ENCODE measurements at regions of chr9 and their contacts with region 1.

Region 1: DNA sequence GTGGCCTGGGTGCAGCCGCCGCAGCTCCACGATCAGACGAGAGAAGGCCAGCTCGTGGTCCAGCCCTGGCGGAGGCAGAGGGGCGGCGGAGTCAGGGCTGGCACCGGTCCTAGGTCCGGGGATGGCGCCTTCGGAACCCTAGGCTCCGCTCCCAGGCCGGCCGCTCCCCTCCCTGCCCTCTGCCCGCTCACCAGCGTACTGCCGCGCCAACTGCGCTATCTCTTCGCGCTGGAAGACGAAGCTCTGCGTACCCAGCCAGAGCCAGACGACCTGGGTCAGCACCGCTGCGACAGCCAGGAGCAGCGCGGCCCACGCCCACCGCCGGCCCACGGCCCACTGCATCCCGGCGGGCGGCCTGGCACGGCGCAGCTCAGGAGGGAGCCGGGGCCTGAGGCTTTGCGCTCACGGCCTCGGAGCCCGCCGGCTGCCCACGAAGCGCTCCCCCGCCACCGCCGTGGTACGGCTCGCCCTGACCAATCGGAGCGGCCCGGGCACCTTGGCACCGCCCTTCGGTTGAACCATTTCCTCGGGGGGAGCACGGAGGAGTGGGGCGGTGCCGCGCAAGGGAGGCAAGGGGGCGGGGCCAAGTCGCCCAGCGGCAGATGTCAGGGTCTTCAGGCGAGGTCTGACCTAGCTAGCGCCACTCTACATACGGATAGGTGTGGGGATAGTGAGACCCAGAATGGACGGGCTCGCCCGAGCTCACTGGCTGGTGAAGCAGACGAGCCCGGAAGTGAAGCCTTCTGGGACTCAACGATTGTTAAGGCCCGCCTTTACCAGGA is at the start of gene SIGMAR1:
- DNase-seq: peak; percentile 95
- H3K4me3 Mint-ChIP-seq: peak within 1 kb of the TSS; percentile 88
- H3K27ac Mint-ChIP-seq: peak within 1 kb of the TSS; percentile 89
- H3K4me1 Mint-ChIP-seq: peaks cover 42% of the 10 kb centered on the region
- H3K27me3 Mint-ChIP-seq: no peaks in the 10 kb centered on the region

Region 2: GRCh38 chr9:34603610-34604231 is 33.8 kb before region 1 on chr9:
- CTCF ChIA-PET with region 1: interaction called, 33 read pairs
- DNase-seq: peak; percentile 88
- H3K4me3 Mint-ChIP-seq: no peak overlapping the region
- H3K27ac Mint-ChIP-seq: no peak overlapping the region
- H3K4me1 Mint-ChIP-seq: no peaks in the 10 kb centered on the region
- H3K27me3 Mint-ChIP-seq: peaks cover 39% of the 10 kb centered on the region

Region 3: DNA sequence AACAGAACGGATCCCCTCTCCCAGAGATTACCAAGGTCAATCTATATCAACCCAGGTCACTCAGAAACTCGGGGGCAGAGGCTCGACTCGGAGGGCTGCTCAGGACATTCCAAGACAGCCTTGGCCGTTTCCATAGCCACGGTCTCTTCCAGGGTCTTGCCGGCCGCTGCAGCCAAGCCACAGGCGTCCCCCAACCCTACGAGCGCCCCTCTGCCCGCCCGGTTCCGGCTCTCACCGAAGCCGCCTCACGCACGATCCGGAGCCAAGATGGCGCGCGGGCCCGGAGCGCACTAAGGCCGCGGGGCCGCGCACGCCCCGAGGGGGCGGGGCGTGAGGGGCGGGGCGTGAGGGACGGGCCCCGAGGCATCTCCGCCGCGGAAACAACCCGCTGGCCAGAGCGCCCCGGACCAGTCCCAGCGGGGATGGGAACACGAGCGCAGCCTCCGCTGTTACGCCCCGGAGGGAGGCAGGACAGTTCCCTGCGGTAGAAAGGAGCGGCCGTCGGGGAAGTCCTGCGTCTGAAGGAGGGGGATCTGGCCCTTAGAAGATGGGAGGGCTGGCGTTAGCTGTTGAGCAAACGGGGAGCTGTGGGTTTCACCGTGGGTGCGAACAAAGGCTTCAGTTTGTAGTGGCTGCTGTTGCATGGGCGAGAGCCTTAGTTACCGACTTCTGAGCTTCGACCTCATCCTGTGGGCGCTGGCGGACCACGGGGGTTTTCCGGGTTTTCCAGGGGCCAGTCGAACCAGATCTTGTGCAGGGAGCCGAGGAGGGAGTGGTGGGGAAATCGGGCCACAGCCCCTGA is 25.5 kb before region 1 on chr9 and contains the start of gene RPP25L:
- CTCF ChIA-PET with region 1: interaction called, 130 read pairs
- DNase-seq: peak; percentile 88
- H3K4me3 Mint-ChIP-seq: peak within 1 kb of the TSS; percentile 91
- H3K27ac Mint-ChIP-seq: peak within 1 kb of the TSS; percentile 89
- H3K4me1 Mint-ChIP-seq: peaks cover 26% of the 10 kb centered on the region
- H3K27me3 Mint-ChIP-seq: no peaks in the 10 kb centered on the region

Region 4: GRCh38 chr9:34620061-34620994 is 17.2 kb before region 1 on chr9 and contains the start of gene DCTN3:
- CTCF ChIA-PET with region 1: interaction called, 130 read pairs
- DNase-seq: peak; percentile 97
- H3K4me3 Mint-ChIP-seq: peak within 1 kb of the TSS; percentile 85
- H3K27ac Mint-ChIP-seq: peak within 1 kb of the TSS; percentile 76
- H3K4me1 Mint-ChIP-seq: peaks cover 32% of the 10 kb centered on the region
- H3K27me3 Mint-ChIP-seq: peaks cover 48% of the 10 kb centered on the region

Region 5: DNA sequence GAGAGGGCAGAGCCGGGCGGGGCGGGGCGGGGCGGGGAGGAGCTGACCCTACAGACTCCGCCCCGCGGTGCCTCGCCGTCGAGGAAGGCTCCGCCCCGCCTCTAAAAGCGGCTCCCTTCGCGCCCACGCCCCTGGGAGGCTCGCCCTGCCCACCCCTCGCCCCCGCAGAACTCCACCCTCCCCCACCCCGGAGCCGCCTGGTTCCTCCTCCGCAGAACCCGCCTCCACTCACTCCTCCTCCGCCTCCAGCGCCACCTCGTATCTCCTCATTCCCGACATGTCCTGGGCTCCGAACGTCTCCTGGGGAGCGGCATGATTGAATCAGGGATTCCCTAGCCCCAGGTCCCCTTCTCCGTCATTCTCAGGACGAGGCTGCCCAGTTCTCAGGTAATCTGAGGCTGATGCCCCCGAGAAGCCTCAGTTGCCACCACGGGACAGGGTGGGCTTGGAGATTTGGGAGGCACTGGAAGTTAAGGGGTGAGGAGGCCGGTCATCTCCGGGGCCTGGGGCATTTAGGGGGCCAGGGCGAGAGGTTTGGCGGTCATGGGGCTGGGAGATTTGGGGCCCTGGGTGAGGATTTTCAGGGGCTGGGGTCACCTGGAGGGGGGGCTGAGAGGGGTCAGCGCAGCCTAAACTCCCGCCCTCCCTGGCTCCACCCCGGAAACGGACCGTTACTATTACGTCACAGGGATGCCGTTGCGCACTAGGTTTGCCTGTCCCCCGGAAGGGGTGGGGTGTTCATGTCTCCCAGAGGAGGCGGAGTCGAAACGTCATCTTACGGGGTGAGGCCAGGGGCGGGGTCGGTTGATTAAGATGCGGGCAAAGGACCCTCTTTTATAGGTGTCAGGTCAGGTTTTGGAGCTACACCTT is 28.1 kb after region 1 on chr9:
- CTCF ChIA-PET with region 1: interaction called, 16 read pairs
- DNase-seq: peak; percentile 92
- H3K4me3 Mint-ChIP-seq: peak overlapping the region; percentile 85
- H3K27ac Mint-ChIP-seq: peak overlapping the region; percentile 93
- H3K4me1 Mint-ChIP-seq: peaks cover 49% of the 10 kb centered on the region
- H3K27me3 Mint-ChIP-seq: peaks cover 15% of the 10 kb centered on the region